ENCODE measurements at regions of chr2 and their contacts with region 1.

Region 1: GRCh38 chr2:174039551-174040416 is 74.6 kb upstream of the SP3 start:
- DNase-seq: peak; percentile 92
- ATAC-seq: peak; percentile 96
- H3K4me3 Mint-ChIP-seq: peak overlapping the region; percentile 37
- H3K27ac Mint-ChIP-seq: peak overlapping the region; percentile 93
- H3K4me1 Mint-ChIP-seq: peaks cover 18% of the 10 kb centered on the region
- H3K27me3 Mint-ChIP-seq: peaks cover 5% of the 10 kb centered on the region

Region 2: DNA sequence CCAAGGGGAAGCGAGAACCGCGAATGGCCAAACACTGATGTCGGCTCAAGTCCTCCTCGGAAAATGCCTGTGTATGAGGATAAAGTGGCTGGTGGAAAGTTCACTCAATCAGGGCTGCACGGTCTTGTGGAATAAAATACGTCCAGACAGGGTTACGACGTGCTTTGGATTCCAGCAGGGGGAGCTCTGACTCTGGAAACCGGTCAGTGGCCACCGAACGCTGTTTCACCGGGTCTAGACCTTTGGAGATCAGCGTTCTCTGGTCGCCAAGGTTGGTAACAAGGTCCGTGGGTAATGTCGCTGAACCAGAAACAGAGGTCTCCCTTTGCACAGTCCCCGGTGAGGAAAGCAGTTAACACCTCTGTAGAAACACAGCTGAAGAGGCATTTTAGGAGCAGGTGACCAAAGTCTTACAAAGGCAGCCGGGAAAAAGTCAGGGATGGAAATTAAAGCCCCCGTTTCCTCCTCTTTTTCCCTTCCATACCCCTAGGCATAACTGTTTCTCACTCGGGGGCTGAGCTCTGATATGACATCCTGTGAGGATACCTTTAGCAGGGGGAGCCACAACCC is 637.3 kb before region 1 on chr2:
- CTCF ChIA-PET with region 1: no interaction called
- POLR2A ChIA-PET with region 1: no interaction called
- intact Hi-C with region 1: loop called in 1 of 2 experiments (anchors 2 kb)
- DNase-seq: peak; percentile 85
- ATAC-seq: peak; percentile 96
- H3K4me3 Mint-ChIP-seq: no peak overlapping the region
- H3K27ac Mint-ChIP-seq: no peak overlapping the region
- H3K4me1 Mint-ChIP-seq: peaks cover 5% of the 10 kb centered on the region
- H3K27me3 Mint-ChIP-seq: peaks cover 43% of the 10 kb centered on the region

Region 3: GRCh38 chr2:173749315-173749714 is 290.5 kb before region 1 on chr2:
- CTCF ChIA-PET with region 1: no interaction called
- POLR2A ChIA-PET with region 1: no interaction called
- intact Hi-C with region 1: loop called (anchors 5 to 10 kb)
- DNase-seq: no peak
- ATAC-seq: no peak
- H3K4me3 Mint-ChIP-seq: no peak overlapping the region
- H3K27ac Mint-ChIP-seq: no peak overlapping the region
- H3K4me1 Mint-ChIP-seq: no peaks in the 10 kb centered on the region
- H3K27me3 Mint-ChIP-seq: peaks cover 6% of the 10 kb centered on the region

Region 4: GRCh38 chr2:173884025-173884802 is 155.6 kb before region 1 on chr2:
- CTCF ChIA-PET with region 1: interaction called, 4 read pairs
- POLR2A ChIA-PET with region 1: no interaction called
- intact Hi-C with region 1: loop called in 1 of 2 experiments (anchors 2 kb)
- DNase-seq: peak; percentile 53
- ATAC-seq: no peak
- H3K4me3 Mint-ChIP-seq: no peak overlapping the region
- H3K27ac Mint-ChIP-seq: no peak overlapping the region
- H3K4me1 Mint-ChIP-seq: no peaks in the 10 kb centered on the region
- H3K27me3 Mint-ChIP-seq: peaks cover 12% of the 10 kb centered on the region

Region 5: DNA sequence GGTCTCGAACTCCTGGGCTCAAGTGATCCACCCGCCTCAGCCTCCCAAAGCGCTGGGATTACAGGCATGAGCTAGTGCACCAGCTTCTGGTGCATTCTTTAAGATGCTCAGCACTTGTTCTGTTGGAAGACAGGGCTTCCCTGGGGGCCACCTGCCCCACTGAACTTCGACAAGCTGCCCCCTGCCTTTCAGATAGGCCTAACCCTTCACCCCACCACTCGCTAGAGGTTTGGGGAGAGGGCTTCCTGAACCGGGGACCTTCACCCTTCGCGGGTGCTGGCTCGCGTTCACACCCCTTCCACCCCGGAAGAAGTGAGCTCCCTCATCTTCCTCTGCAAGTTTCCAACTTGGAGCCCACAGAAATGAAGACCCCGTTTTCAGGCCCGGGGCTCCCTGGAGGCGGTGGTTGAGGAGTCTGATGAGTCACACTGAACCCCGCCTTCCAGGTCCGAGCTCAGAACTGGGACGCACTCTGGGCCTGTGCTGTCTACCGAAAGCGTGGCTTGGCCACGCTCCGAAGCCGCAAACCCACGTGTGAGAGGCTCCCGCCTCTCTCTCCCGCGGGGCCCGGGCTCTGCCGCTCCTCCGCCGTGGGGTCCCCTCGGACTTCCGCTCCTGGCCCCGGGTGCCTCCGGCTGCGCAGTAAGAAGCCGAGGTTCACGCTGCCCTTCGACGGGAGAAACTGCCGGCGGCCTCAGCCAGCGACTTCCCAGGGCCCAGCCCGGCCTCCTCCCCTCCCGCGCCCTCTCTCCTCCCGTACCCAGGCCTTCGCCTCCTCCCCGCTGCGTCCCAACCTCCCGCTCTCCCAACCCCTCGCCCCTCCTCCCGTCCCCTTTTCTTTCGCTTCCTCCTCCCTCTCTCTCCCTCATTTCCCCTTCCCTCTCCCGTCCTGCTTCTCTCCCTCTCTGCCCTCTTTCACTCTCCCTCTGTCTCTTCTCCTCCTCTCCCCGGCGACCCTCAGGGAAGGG is 27.2 kb before region 1 on chr2:
- CTCF ChIA-PET with region 1: no interaction called
- POLR2A ChIA-PET with region 1: no interaction called
- intact Hi-C with region 1: no loop called
- DNase-seq: peak; percentile 47
- ATAC-seq: peak; percentile 51
- H3K4me3 Mint-ChIP-seq: peak overlapping the region; percentile 11
- H3K27ac Mint-ChIP-seq: no peak overlapping the region
- H3K4me1 Mint-ChIP-seq: peaks cover 15% of the 10 kb centered on the region
- H3K27me3 Mint-ChIP-seq: peaks cover 8% of the 10 kb centered on the region

Region 6: GRCh38 chr2:174023591-174024523 is 15.9 kb before region 1 on chr2:
- CTCF ChIA-PET with region 1: interaction called, 5 read pairs
- POLR2A ChIA-PET with region 1: no interaction called
- intact Hi-C with region 1: loop called in 1 of 2 experiments (anchors 2 kb)
- DNase-seq: peak; percentile 71
- ATAC-seq: peak; percentile 86
- H3K4me3 Mint-ChIP-seq: no peak overlapping the region
- H3K27ac Mint-ChIP-seq: peak overlapping the region; percentile 5
- H3K4me1 Mint-ChIP-seq: peaks cover 16% of the 10 kb centered on the region
- H3K27me3 Mint-ChIP-seq: no peaks in the 10 kb centered on the region

Region 7: GRCh38 chr2:174108579-174108978 is 68.8 kb after region 1 on chr2:
- CTCF ChIA-PET with region 1: no interaction called
- POLR2A ChIA-PET with region 1: no interaction called
- intact Hi-C with region 1: no loop called
- DNase-seq: no peak
- ATAC-seq: no peak
- H3K4me3 Mint-ChIP-seq: no peak overlapping the region
- H3K27ac Mint-ChIP-seq: no peak overlapping the region
- H3K4me1 Mint-ChIP-seq: no peaks in the 10 kb centered on the region
- H3K27me3 Mint-ChIP-seq: no peaks in the 10 kb centered on the region

Region 8: GRCh38 chr2:174248187-174248997 is 208.6 kb after region 1 on chr2 and contains the start of gene OLA1:
- CTCF ChIA-PET with region 1: no interaction called
- POLR2A ChIA-PET with region 1: no interaction called
- intact Hi-C with region 1: loop called in 1 of 2 experiments (anchors 5 kb)
- DNase-seq: peak; percentile 98
- ATAC-seq: peak; percentile 97
- H3K4me3 Mint-ChIP-seq: peak within 1 kb of the TSS; percentile 90
- H3K27ac Mint-ChIP-seq: peak within 1 kb of the TSS; percentile 85
- H3K4me1 Mint-ChIP-seq: peaks cover 31% of the 10 kb centered on the region
- H3K27me3 Mint-ChIP-seq: no peaks in the 10 kb centered on the region
- total RNA-seq, gene OLA1: 136 to 157 TPM